ENCODE measurements at regions of chr3 and their contacts with region 1.

Region 1: GRCh38 chr3:58433400-58434169 is at the start of gene PDHB:
- DNase-seq: peak; percentile 86 to 99 (median 92)

Region 2: DNA sequence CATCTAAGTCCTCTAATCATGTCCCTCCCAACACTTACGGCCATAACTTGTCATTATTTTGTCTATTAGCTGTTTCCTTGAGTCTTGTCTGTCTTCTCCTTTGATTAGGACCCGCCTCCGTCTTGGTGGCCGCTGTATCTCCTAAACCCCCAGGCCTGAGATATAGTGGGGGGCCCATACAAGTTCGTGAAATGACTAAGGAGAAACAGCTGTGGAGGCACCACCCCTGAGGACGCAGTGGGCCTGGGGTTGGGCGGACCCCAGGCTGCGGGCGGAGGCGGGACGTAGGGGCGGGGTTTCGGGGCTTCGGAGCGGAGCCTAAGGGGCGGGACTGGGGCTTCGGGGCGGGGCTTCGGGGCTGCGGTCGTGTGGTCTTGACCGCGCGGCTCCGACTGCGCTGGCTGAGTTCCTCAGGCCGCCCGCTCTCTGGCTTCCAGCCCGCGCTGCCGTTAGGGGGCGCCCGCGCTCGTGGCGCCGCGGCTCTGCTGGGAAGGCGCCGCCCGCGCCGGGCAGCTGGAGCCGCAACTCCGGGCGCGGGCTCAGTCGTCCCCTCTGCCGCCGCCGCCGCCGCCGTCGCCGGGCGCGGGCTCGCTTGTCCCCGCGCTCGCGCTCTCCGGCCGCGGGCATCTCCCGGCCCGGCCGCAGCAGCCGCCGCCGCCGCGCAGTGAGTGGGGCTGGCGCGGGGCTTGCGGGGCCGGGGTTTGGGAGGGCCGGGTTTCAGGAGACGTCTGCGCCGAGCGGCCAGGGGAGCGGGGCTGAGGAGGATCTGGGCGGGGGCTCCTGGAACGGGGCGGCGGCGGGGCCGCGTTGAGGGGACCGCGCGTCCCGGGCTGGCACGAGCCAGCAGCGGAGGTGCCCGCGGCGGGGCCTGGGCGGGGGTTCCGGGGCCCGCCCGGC is 58.2 kb after region 1 on chr3 and contains the start of gene KCTD6:
- intact Hi-C with region 1: loop called (anchors 2 kb)
- DNase-seq: peak; percentile 79 to 98 (median 84)